Posterior vena cava (tissue), 2 donors: ENCODE measurements at regions of chr3 and their contacts with region 1.

Region 1: GRCh38 chr3:174101244-174101643 is 703.7 kb downstream of the NLGN1 start:
- DNase-seq: no peak

Region 2: DNA sequence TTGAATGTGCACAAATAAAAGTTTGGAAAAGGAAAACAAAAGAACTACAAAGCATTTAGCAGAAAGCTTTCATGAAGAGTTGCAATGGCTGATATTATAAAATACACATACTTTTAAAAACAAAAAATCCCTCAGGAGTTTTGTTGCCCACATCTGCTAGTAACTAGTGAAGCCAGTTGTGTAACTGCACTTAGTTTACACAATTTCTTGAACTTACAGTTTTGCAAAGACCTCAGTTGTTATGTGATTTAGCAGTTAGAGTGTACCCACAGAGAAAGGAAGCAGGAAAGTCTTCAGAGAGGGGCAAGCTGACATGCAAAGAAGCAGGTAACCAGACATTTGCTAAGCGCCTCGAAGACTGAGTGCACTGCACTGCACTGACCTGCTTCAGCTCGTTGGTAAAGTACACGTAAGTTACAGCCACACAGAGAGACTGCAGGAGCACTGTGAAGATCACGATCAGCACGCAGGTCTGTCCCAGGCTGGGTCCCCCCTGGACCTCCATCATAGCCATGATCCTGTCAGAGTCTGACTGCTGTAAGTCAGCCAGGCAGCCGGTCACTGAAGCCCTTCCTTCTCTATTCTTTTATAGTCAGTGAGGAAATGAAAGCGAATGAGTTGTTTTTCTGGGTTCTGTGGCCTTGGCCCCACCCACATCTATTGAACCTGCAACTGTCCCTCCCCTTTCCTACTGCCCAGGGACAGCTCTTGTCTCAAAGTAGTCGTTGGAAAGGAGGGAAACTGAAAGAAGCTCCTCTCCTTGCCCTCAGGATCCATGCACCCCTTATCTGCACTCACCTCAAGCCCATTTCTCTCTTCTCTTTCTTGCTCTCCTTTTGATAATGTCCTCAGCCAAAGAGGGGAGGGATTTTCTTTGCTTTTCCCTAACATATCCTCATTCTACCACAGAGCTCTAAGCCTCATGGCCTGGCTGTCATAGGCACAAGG is 1578.1 kb before region 1 on chr3 and contains the start of gene TNFSF10:
- intact Hi-C with region 1: no loop called
- DNase-seq: peak; percentile 85
- total RNA-seq, gene TNFSF10: 17.3 to 18.7 TPM

Region 3: GRCh38 chr3:174016186-174016585 is 85.1 kb before region 1 on chr3:
- intact Hi-C with region 1: no loop called
- DNase-seq: no peak

Region 4: GRCh38 chr3:174051191-174051590 is 50.1 kb before region 1 on chr3:
- intact Hi-C with region 1: no loop called
- DNase-seq: no peak

Region 5: GRCh38 chr3:174089592-174089991 is 11.7 kb before region 1 on chr3:
- intact Hi-C with region 1: loop called in 1 of 2 experiments (anchors 2 kb)
- DNase-seq: no peak

Region 6: GRCh38 chr3:174363256-174363655 is 262.0 kb after region 1 on chr3:
- intact Hi-C with region 1: no loop called
- DNase-seq: no peak